Heart left ventricle (tissue), 16 donors: ENCODE measurements at regions of chr11 and their contacts with region 1.

Region 1: GRCh38 chr11:122709039-122709760 is 53.7 kb downstream of the UBASH3B start:
- DNase-seq: no peak
- ATAC-seq: no peak
- H3K4me3 ChIP-seq: no peak overlapping the region
- H3K27ac ChIP-seq: peak overlapping the region in 1 of 12 donors; percentile 60
- H3K4me1 ChIP-seq: peaks cover 0 to 24% (median 0%) of the 10 kb centered on the region in 12 donors
- H3K27me3 ChIP-seq: no peaks in the 10 kb centered on the region
- CTCF ChIP-seq: no peak
- POLR2A ChIP-seq: no peak

Region 2: DNA sequence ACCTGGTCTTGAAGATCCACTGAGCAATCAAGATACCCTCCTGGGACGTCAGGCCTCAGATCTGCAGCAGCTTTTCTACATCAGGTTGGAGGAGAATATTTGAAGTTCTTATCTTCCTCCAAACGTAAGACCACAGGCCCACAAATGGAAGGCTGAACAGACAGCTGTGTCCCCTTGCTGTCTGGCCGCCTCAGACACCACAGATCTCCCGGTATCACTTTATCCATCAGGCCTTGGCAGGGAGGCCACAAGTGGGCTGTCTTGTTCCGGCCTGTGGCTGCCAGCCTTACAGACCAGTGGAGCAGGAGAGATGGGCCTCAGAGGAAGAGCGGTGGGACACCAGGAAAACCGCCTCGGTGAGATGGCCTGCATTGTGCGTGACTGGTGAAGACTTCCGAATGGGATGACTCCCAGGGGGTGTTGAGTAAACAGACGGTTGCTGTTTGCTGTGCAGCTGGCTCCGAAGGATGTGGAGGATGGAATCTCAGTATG is 37.8 kb before region 1 on chr11:
- intact Hi-C with region 1: no loop called
- DNase-seq: peak in 2 of 5 donors; percentile 50
- ATAC-seq: peak in 3 of 4 donors; percentile 20 to 65 (median 44)
- H3K4me3 ChIP-seq: no peak overlapping the region
- H3K27ac ChIP-seq: peak overlapping the region in 2 of 12 donors; percentile 20 to 25
- H3K4me1 ChIP-seq: peaks cover 0 to 70% (median 0%) of the 10 kb centered on the region in 12 donors
- H3K27me3 ChIP-seq: no peaks in the 10 kb centered on the region
- CTCF ChIP-seq: no peak
- POLR2A ChIP-seq: no peak

Region 3: DNA sequence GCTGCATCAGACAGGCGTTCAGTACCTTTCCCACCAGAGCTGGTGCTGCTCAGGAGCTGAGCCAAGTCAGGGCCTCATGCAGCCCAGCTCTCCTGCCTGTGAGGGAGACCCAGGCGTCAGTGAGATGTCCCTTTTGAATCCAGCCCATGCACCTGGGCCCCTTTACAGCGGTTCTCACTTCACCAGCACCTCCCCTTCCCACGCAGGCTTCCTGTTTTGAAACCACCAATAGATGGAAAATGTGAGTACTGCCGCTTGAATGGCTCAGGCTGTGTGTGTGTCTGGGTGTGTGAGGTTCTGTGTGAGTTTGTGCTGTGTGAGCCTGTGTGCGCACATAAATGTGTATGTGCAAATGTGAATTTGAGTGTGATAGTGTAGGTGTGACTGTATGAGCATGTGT is 34.7 kb after region 1 on chr11:
- intact Hi-C with region 1: loop called in 1 of 10 experiments (anchors 5 kb)
- DNase-seq: no peak
- ATAC-seq: peak in 2 of 4 donors; percentile 33 to 37
- H3K4me3 ChIP-seq: no peak overlapping the region
- H3K27ac ChIP-seq: peak overlapping the region in 1 of 12 donors; percentile 77
- H3K4me1 ChIP-seq: peaks cover 0 to 84% (median 11%) of the 10 kb centered on the region in 12 donors
- H3K27me3 ChIP-seq: peaks cover 0 to 3% (median 0%) of the 10 kb centered on the region in 9 donors
- CTCF ChIP-seq: no peak
- POLR2A ChIP-seq: no peak

Region 4: GRCh38 chr11:122843281-122844141 is 134.3 kb after region 1 on chr11:
- intact Hi-C with region 1: no loop called
- DNase-seq: no peak
- ATAC-seq: no peak
- H3K4me3 ChIP-seq: no peak overlapping the region
- H3K27ac ChIP-seq: peak overlapping the region in 1 of 12 donors; percentile 51
- H3K4me1 ChIP-seq: no peaks in the 10 kb centered on the region
- H3K27me3 ChIP-seq: no peaks in the 10 kb centered on the region
- CTCF ChIP-seq: no peak
- POLR2A ChIP-seq: no peak

Region 5: GRCh38 chr11:122981388-122982264 is 272.4 kb after region 1 on chr11 and contains the start of gene BSX:
- intact Hi-C with region 1: no loop called
- DNase-seq: peak; percentile 33 to 72 (median 47)
- ATAC-seq: peak; percentile 71 to 91 (median 89)
- H3K4me3 ChIP-seq: no peak within 1 kb of the TSS
- H3K27ac ChIP-seq: no peak within 1 kb of the TSS
- H3K4me1 ChIP-seq: peaks cover 0 to 33% (median 14%) of the 10 kb centered on the region in 12 donors
- H3K27me3 ChIP-seq: peaks cover 58 to 100% (median 99%) of the 10 kb centered on the region in 9 donors
- CTCF ChIP-seq: no peak
- POLR2A ChIP-seq: no peak
- total RNA-seq, gene BSX: not detected